ENCODE measurements at regions of chr7 and their contacts with region 1.

Region 1: GRCh38 chr7:107743567-107744344 is at the start of gene CBLL1:
- DNase-seq: peak; percentile 93
- ATAC-seq: peak; percentile 98
- H3K4me3 ChIP-seq: peak within 1 kb of the TSS; percentile 96 to 97
- H3K27ac ChIP-seq: peak within 1 kb of the TSS; percentile 96
- H3K4me1 ChIP-seq: peaks cover 19% of the 10 kb centered on the region
- H3K27me3 ChIP-seq: no peaks in the 10 kb centered on the region
- CTCF ChIP-seq: peak; percentile 85
- total RNA-seq, gene CBLL1: 34.7 TPM

Region 2: DNA sequence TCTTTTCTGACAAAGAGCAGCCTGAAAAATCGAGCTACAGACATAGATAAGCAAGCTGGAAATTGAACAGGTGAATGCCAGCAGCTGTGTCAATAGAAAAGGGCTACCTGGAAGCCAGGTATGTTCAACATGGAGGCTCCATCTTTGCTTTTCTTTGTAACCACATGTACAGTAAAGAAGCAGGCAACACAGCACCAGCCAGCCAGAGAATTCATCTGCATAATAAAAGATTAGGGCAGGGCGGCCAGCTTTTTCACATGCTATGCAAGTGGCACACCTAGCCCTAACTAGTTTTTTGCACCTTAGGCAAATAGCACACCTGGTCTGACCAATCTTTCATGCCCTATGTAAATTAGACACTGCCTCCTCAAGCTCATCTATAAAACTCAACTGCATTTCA is 205.8 kb before region 1 on chr7:
- CTCF ChIA-PET with region 1: no interaction called
- POLR2A ChIA-PET with region 1: no interaction called
- in situ Hi-C with region 1: no loop called
- intact Hi-C with region 1: no loop called
- DNase-seq: no peak
- ATAC-seq: no peak
- H3K4me3 ChIP-seq: no peak overlapping the region
- H3K27ac ChIP-seq: no peak overlapping the region
- H3K4me1 ChIP-seq: no peaks in the 10 kb centered on the region
- H3K27me3 ChIP-seq: no peaks in the 10 kb centered on the region
- CTCF ChIP-seq: no peak

Region 3: GRCh38 chr7:107879400-107880035 is 135.8 kb after region 1 on chr7:
- CTCF ChIA-PET with region 1: interaction called, 26 read pairs
- POLR2A ChIA-PET with region 1: interaction called, 3 read pairs
- in situ Hi-C with region 1: no loop called
- intact Hi-C with region 1: loop called (anchors 2 kb)
- DNase-seq: peak; percentile 56
- ATAC-seq: peak; percentile 90
- H3K4me3 ChIP-seq: no peak overlapping the region
- H3K27ac ChIP-seq: no peak overlapping the region
- H3K4me1 ChIP-seq: peaks cover 3% of the 10 kb centered on the region; the same call in 1 of the 2 replicates
- H3K27me3 ChIP-seq: peaks cover 2% of the 10 kb centered on the region; the same call in 1 of the 2 replicates
- CTCF ChIP-seq: peak; percentile 82; the same call in 1 of the 2 replicates

Region 4: DNA sequence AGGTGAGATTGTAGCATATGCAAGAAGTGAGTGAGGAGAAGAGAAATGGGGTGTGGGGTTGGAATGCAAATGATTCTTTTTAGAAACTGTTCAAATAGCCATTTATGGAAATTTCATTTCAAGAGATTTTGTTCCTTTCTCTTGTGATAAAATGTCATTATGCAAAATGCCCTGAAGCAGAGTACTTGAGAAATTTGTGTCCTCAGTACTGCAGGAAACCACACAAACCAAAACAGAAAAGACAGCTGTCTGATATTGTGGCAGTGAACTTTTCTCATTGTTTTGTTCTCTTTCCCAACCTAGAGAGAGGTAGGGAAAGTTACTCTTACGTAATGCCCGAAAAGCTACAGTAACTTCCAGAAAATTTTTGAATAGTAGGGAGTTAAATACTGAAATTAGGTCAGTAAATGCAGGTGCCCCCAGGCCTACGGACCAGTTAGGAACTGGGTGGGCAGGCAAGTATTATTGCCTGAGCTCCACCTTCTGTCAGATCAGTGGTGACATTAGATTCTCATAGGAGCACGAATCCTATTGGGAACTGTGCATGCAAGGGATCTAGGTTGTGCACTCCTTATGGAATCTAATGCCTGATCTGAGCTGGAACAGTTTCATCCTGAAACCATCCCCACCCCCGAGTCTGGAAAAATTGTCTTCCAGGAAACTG is 181.2 kb after region 1 on chr7:
- CTCF ChIA-PET with region 1: no interaction called
- POLR2A ChIA-PET with region 1: interaction called, 10 read pairs
- in situ Hi-C with region 1: no loop called
- intact Hi-C with region 1: no loop called
- DNase-seq: no peak
- ATAC-seq: no peak
- H3K4me3 ChIP-seq: no peak overlapping the region
- H3K27ac ChIP-seq: peak overlapping the region; percentile 21
- H3K4me1 ChIP-seq: peaks cover 20% of the 10 kb centered on the region
- H3K27me3 ChIP-seq: no peaks in the 10 kb centered on the region
- CTCF ChIP-seq: no peak

Measured in Panc1 (cell line).